ENCODE measurements at regions of chr6 and their contacts with region 1.

Region 1: DNA sequence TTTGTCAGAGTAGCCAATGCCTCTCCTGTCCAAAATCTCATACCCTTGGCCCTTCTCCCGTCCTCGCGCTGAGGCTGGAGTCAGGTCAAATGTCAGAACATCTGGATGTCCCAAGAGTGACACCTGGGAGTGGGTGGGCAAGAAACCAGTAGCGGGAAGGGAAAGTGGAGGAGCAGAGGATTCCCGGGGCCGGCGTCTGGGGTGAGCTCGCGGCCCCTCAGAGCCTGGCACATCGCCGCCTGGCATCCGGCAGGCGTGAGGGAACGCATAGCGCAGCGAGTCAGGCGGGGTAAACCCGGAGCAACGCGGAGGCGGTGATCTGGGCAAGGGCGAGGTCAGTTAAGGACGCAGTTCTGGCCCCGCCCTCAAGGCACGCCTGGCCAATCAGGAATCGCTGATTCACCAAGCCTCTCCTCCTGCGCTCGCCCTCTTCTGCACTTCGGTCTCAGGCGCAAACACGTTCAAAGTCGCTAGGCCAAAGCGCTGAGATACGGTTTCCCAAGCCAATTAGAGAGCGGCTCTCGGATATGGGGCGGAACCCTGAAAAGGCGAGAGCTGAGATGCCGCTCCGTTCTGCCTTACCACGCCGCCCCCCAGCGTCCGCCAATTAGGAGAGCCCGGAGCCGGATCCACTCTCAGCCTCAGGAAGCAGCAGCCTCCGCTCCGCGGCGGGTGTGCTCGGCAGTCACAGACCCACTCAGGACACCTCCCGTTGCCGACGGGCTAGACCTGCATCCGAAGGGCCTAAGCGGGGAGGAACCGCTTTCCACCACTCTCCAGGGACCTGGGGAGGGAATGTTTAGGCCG is 22.5 kb downstream of the VPS52 start:
- DNase-seq: peak; percentile 95 to 97
- H3K4me3 ChIP-seq: peak overlapping the region; percentile 69
- H3K27ac ChIP-seq: peak overlapping the region; percentile 66
- H3K4me1 ChIP-seq: peaks cover 28% of the 10 kb centered on the region
- H3K27me3 ChIP-seq: peaks cover 16% of the 10 kb centered on the region
- CTCF ChIP-seq: no peak

Region 2: DNA sequence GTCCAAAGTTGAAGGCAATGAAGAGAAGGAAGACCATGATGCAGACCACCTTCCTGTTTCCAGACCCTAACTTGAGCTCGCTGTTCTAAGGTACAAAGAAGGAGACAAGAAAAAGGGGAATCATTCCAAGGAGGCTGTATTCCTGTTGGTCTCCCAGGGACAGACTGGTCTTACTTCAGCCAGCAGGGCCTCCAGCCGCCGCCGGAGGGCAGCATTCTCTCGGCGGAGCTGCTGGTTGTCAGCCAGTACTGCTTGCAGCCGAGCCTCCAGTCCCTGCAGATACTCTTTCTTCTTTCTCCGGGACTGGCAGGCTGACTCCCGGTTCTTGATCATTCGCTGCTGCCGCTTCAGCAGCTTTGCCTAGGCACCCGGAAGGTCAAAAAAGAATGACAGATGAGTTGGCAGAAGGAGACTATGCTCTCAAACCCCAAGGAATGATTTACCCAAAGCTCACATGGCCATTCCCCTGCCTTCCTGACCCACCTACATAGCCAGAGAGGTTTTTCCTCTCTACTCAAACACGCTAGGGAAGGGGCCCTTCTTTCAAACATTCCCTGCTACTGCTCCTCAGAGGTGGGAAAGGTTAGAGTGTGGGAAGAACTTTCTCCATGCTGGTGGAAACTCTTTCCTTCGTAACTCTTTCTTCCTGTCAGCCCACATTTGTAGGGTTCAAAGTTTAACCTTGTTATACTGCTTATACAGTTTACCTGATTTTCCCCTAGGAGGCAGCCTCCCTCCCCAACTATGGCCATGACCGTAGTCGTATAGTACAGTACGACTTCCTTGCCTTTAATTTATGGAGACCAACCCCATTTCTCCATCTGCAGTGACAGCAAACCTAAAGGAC is 1130.1 kb before region 1 on chr6:
- CTCF ChIA-PET with region 1: interaction called, 10 read pairs
- POLR2A ChIA-PET with region 1: no interaction called
- intact Hi-C with region 1: no loop called
- DNase-seq: peak; percentile 68 to 81
- H3K4me3 ChIP-seq: no peak overlapping the region
- H3K27ac ChIP-seq: no peak overlapping the region
- H3K4me1 ChIP-seq: peaks cover 16% of the 10 kb centered on the region; the same call in 1 of the 2 replicates
- H3K27me3 ChIP-seq: no peaks in the 10 kb centered on the region
- CTCF ChIP-seq: peak; percentile 86

Region 3: DNA sequence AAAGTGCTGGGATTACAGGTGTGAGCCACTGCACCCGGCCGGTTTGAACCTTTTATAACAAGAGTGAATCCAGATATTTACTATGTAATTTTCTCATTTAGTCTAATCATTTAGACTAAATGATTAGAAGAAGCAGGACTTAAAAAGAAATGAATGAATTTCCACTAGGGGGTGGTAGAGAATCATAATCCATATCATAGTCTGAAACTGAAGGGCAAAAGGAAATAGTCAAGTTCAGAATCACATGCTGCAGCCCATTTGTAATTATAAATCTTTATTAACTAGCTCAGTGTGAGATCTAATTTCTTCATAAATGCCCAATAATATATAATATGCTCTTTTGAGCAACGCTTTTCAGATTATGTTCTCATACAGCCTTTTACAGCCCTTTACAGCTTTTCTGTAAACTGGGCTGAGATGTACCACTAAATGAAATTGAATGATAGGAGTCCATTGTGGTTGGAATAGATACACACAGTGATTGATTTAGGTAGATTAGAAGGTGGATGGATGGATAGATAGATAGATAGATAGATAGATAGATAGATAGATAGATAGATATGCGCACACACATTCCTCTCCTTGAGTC is 363.3 kb before region 1 on chr6:
- CTCF ChIA-PET with region 1: no interaction called
- POLR2A ChIA-PET with region 1: no interaction called
- intact Hi-C with region 1: loop called (anchors 1 kb)
- DNase-seq: peak in 1 of 2 experiments; percentile 54
- H3K4me3 ChIP-seq: no peak overlapping the region
- H3K27ac ChIP-seq: no peak overlapping the region
- H3K4me1 ChIP-seq: no peaks in the 10 kb centered on the region
- H3K27me3 ChIP-seq: 0 out of 2 replicates have a peak, but pooled peaks cover 7% of the 10 kb centered on the region
- CTCF ChIP-seq: peak; percentile 82

Region 4: GRCh38 chr6:33123732-33124524 is 125.2 kb before region 1 on chr6:
- CTCF ChIA-PET with region 1: interaction called, 3 read pairs
- POLR2A ChIA-PET with region 1: no interaction called
- intact Hi-C with region 1: loop called (anchors 2 kb)
- DNase-seq: peak; percentile 8 to 42
- H3K4me3 ChIP-seq: no peak overlapping the region
- H3K27ac ChIP-seq: no peak overlapping the region
- H3K4me1 ChIP-seq: no peaks in the 10 kb centered on the region
- H3K27me3 ChIP-seq: peaks cover 65% of the 10 kb centered on the region
- CTCF ChIP-seq: peak; percentile 75

Region 5: GRCh38 chr6:33172688-33173534 is 76.2 kb before region 1 on chr6:
- CTCF ChIA-PET with region 1: no interaction called
- POLR2A ChIA-PET with region 1: no interaction called
- intact Hi-C with region 1: no loop called
- DNase-seq: peak in 1 of 2 experiments; percentile 35
- H3K4me3 ChIP-seq: no peak overlapping the region
- H3K27ac ChIP-seq: no peak overlapping the region
- H3K4me1 ChIP-seq: no peaks in the 10 kb centered on the region
- H3K27me3 ChIP-seq: peaks cover 36% of the 10 kb centered on the region
- CTCF ChIP-seq: peak; percentile 79

Region 6: DNA sequence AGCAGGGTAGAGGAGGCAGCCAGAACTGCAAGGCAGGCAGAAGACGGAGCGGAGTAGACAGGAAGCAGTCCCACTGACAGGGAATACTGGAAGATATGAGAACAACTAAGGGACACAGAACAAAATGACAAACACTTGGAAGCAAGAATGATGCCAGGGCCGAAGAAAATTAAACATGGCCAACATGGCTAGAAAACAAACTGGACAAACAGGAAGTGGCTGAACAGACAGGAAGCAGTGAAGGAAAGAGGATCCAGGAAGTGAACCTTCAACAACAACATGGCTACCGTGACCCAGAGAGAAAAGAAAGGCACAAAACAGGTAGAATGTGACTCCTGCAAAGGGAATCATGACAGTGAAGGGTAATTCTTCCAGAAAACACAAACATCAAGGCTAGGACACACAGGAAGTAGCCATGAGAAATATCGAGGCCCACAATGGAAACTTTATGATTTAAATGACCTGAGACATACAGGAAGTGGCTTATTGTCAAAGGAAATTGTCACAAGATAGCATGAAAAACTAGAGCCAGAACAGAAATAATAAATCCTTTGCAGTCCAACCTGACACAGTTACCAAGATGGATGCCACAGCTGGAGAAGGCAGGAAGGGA is 66.0 kb before region 1 on chr6:
- CTCF ChIA-PET with region 1: no interaction called
- POLR2A ChIA-PET with region 1: no interaction called
- intact Hi-C with region 1: no loop called
- DNase-seq: no peak
- H3K4me3 ChIP-seq: no peak overlapping the region
- H3K27ac ChIP-seq: no peak overlapping the region
- H3K4me1 ChIP-seq: no peaks in the 10 kb centered on the region
- H3K27me3 ChIP-seq: peaks cover 24% of the 10 kb centered on the region; the same call in 1 of the 2 replicates
- CTCF ChIP-seq: no peak

Region 7: GRCh38 chr6:33200219-33201146 is 48.6 kb before region 1 on chr6 and contains the starts of genes RXRB and SLC39A7:
- CTCF ChIA-PET with region 1: no interaction called
- POLR2A ChIA-PET with region 1: no interaction called
- intact Hi-C with region 1: loop called (anchors 2 kb)
- DNase-seq: peak; percentile 95 to 96
- H3K4me3 ChIP-seq: peak within 1 kb of the TSS; percentile 62
- H3K27ac ChIP-seq: peak within 1 kb of the TSS; percentile 79
- H3K4me1 ChIP-seq: peaks cover 28% of the 10 kb centered on the region
- H3K27me3 ChIP-seq: no peaks in the 10 kb centered on the region
- CTCF ChIP-seq: 0 out of 2 replicates have a peak, but pooled peaks have one; percentile 19
- total RNA-seq, gene RXRB: 49.8 and 51.5 TPM in 2 replicates
- total RNA-seq, gene SLC39A7: 96.4 and 110 TPM in 2 replicates

Region 8: DNA sequence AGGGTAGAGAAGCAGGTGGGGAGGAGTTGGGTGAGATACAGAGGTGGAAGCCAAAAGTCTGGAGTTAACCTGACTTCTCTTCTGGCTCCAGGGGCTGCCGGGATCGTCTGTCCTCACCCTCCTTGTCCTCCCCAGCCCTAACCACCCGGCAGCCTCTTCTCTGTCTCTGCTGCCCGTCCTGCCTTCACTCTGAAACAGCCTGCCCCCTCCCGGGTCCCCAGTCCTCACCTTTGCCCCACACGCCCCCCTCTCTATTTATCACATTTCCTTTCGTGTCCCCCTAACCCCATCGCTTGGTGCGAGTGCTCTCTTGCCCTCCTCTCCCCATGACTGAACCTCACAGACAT is 35.2 kb before region 1 on chr6:
- CTCF ChIA-PET with region 1: no interaction called
- POLR2A ChIA-PET with region 1: no interaction called
- intact Hi-C with region 1: no loop called
- DNase-seq: no peak
- H3K4me3 ChIP-seq: no peak overlapping the region
- H3K27ac ChIP-seq: no peak overlapping the region
- H3K4me1 ChIP-seq: no peaks in the 10 kb centered on the region
- H3K27me3 ChIP-seq: 0 out of 2 replicates have a peak, but pooled peaks cover 7% of the 10 kb centered on the region
- CTCF ChIP-seq: no peak